ENCODE measurements at regions of chr7 and their contacts with region 1.

Region 1: DNA sequence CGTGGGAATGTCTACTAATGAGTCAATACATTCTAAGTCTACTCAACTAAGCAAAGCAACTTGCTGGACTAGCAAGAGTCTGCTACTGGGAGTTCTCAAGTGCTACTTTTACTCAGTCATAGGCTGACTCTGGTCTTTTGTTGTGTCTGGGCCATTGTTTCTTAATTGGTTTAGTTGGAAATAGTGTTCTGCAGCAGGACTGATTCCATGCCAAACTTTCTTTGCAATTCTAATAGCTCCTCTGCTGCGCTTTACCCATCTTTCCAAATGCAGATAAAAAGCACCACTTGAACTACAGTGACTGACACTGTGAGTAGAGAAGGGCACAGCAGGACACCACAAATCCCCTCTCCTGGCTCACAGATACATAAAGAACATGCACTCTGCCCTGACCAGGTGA is 125.7 kb downstream of the CD36 start:
- DNase-seq: no peak
- H3K4me3 ChIP-seq: no peak overlapping the region
- H3K27ac ChIP-seq: no peak overlapping the region
- H3K4me1 ChIP-seq: no peaks in the 10 kb centered on the region
- H3K27me3 ChIP-seq: no peaks in the 10 kb centered on the region
- CTCF ChIP-seq: no peak
- POLR2A ChIP-seq: no peak

Region 2: GRCh38 chr7:80748363-80749042 is 15.6 kb before region 1 on chr7:
- CTCF ChIA-PET with region 1: interaction called, 10 read pairs
- POLR2A ChIA-PET with region 1: no interaction called
- dilution Hi-C with region 1: no loop called
- intact Hi-C with region 1: no loop called
- DNase-seq: peak; percentile 35
- H3K4me3 ChIP-seq: peak overlapping the region in 1 of 3 experiments; percentile 23
- H3K27ac ChIP-seq: no peak overlapping the region
- H3K4me1 ChIP-seq: peaks cover 2% of the 10 kb centered on the region
- H3K27me3 ChIP-seq: no peaks in the 10 kb centered on the region
- CTCF ChIP-seq: no peak
- POLR2A ChIP-seq: no peak

Region 3: GRCh38 chr7:80833289-80834268 is 69.4 kb after region 1 on chr7:
- CTCF ChIA-PET with region 1: no interaction called
- POLR2A ChIA-PET with region 1: no interaction called
- dilution Hi-C with region 1: no loop called
- intact Hi-C with region 1: no loop called
- DNase-seq: no peak
- H3K4me3 ChIP-seq: no peak overlapping the region
- H3K27ac ChIP-seq: no peak overlapping the region
- H3K4me1 ChIP-seq: no peaks in the 10 kb centered on the region
- H3K27me3 ChIP-seq: no peaks in the 10 kb centered on the region
- CTCF ChIP-seq: no peak
- POLR2A ChIP-seq: no peak

Region 4: DNA sequence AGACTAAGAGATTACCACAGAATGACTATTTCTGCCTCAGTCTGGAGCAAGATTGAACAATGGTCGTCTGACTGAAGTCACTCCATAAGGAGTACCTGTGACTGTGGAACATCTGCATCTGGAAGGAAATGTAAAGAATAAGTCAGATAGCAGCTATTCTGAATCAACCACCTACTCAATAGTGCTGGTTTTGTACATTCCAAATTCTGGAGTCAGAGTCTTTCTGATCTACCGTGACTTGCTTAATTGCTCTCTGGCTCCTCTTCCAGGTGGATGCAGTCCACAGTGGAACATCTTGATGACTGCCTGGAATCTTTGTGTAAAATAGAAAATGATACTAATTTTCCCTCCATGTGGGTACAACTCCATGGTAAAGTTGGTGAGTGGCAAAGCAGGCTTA is 311.0 kb after region 1 on chr7:
- CTCF ChIA-PET with region 1: no interaction called
- POLR2A ChIA-PET with region 1: no interaction called
- dilution Hi-C with region 1: no loop called
- intact Hi-C with region 1: no loop called
- DNase-seq: no peak
- H3K4me3 ChIP-seq: no peak overlapping the region
- H3K27ac ChIP-seq: no peak overlapping the region
- H3K4me1 ChIP-seq: no peaks in the 10 kb centered on the region
- H3K27me3 ChIP-seq: no peaks in the 10 kb centered on the region
- CTCF ChIP-seq: no peak
- POLR2A ChIP-seq: no peak